CD8-positive, alpha-beta T cell (primary cell): ENCODE measurements at regions of chr5 and their contacts with region 1.

Region 1: GRCh38 chr5:58999804-59000595 is 417.1 kb downstream of the RAB3C start:
- DNase-seq: no peak
- ATAC-seq: no peak
- H3K4me3 ChIP-seq: no peak overlapping the region
- H3K4me3 Mint-ChIP-seq: no peak overlapping the region
- H3K27ac ChIP-seq: no peak overlapping the region
- H3K27ac Mint-ChIP-seq: no peak overlapping the region
- H3K4me1 ChIP-seq: peaks cover 5% of the 10 kb centered on the region
- H3K4me1 Mint-ChIP-seq: peaks cover 59% of the 10 kb centered on the region
- H3K27me3 ChIP-seq: no peaks in the 10 kb centered on the region
- H3K27me3 Mint-ChIP-seq: no peaks in the 10 kb centered on the region
- CTCF ChIP-seq: no peak

Region 2: DNA sequence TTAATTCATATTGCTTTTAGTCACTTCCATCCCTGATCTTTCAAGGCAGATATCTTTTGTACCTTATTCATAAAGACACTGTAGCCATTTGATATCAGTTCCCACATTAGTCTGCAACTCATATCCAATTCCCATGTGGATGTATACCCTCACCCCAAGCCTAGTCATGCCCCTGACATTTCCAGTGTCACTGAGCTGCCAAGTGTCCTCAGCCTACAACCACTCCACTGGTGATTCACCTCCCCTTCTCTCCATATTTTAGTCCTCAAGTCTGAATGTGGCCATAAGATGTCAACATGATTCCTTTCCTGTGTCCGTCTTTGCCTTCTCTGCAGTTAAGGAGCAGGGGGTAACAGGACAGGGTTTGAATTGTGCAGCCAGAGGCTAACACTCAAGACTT is 70.3 kb before region 1 on chr5:
- CTCF ChIA-PET with region 1: no interaction called
- POLR2A ChIA-PET with region 1: no interaction called
- intact Hi-C with region 1: loop called in 1 of 2 experiments (anchors 2 kb)
- DNase-seq: no peak
- ATAC-seq: no peak
- H3K4me3 ChIP-seq: no peak overlapping the region
- H3K4me3 Mint-ChIP-seq: no peak overlapping the region
- H3K27ac ChIP-seq: no peak overlapping the region
- H3K27ac Mint-ChIP-seq: no peak overlapping the region
- H3K4me1 ChIP-seq: peaks cover 6% of the 10 kb centered on the region
- H3K4me1 Mint-ChIP-seq: peaks cover 15% of the 10 kb centered on the region
- H3K27me3 ChIP-seq: no peaks in the 10 kb centered on the region
- H3K27me3 Mint-ChIP-seq: peaks cover 5% of the 10 kb centered on the region
- CTCF ChIP-seq: no peak

Region 3: DNA sequence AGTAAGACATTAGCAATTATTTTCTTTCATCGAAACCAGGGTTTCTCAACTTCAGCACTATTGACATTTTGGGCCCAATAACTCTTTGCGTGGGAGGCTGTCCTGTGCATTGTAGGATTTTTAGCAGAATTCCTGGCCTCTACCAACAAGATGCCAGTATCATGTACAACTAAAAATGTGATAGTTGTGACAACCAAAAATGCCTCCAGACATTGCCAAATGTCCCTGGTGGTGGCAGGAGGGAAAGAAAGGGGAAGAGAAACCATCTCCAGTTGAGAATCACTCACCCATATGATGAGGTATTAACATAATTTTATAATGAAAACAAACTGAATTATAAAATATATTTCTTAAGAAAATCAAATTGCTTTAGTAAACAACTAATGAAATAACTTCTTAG is 11.1 kb before region 1 on chr5:
- CTCF ChIA-PET with region 1: interaction called, 3 read pairs
- POLR2A ChIA-PET with region 1: no interaction called
- intact Hi-C with region 1: loop called in 1 of 2 experiments (anchors 1 kb)
- DNase-seq: no peak
- ATAC-seq: no peak
- H3K4me3 ChIP-seq: no peak overlapping the region
- H3K4me3 Mint-ChIP-seq: no peak overlapping the region
- H3K27ac ChIP-seq: no peak overlapping the region
- H3K27ac Mint-ChIP-seq: no peak overlapping the region
- H3K4me1 ChIP-seq: no peaks in the 10 kb centered on the region
- H3K4me1 Mint-ChIP-seq: peaks cover 4% of the 10 kb centered on the region
- H3K27me3 ChIP-seq: no peaks in the 10 kb centered on the region
- H3K27me3 Mint-ChIP-seq: no peaks in the 10 kb centered on the region
- CTCF ChIP-seq: no peak

Region 4: DNA sequence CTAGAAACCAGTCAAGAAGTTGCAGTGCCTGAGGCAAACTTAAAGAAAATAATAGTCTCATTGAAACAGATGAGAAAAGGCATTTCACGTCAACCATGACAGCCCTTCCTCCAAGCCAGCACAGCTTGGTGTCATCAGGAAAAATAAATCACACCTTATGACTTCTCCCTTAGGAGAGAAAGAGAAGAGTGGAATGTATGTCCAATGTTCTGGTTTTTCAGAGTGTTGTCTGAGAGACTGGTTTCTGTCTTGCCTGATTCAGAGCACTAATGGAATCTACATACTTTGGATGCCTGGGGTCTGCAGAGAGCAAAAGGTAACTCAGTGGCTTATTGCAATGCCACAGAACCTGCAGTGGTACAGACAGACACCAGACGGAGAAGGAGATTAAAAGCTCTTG is 999.1 kb after region 1 on chr5:
- CTCF ChIA-PET with region 1: no interaction called
- POLR2A ChIA-PET with region 1: no interaction called
- intact Hi-C with region 1: no loop called
- DNase-seq: no peak
- ATAC-seq: no peak
- H3K4me3 ChIP-seq: no peak overlapping the region
- H3K4me3 Mint-ChIP-seq: no peak overlapping the region
- H3K27ac ChIP-seq: no peak overlapping the region
- H3K27ac Mint-ChIP-seq: no peak overlapping the region
- H3K4me1 ChIP-seq: no peaks in the 10 kb centered on the region
- H3K4me1 Mint-ChIP-seq: no peaks in the 10 kb centered on the region
- H3K27me3 ChIP-seq: no peaks in the 10 kb centered on the region
- H3K27me3 Mint-ChIP-seq: no peaks in the 10 kb centered on the region
- CTCF ChIP-seq: no peak